HCT116 (cell line): ENCODE measurements at regions of chr11 and their contacts with region 1.

Region 1: GRCh38 chr11:46489661-46490560 is 98.3 kb upstream of the CHRM4 start:
- DNase-seq: peak; percentile 46
- ATAC-seq: peak; percentile 95
- H3K4me3 ChIP-seq: no peak overlapping the region
- H3K27ac ChIP-seq: no peak overlapping the region
- H3K4me1 ChIP-seq: no peaks in the 10 kb centered on the region
- H3K27me3 ChIP-seq: no peaks in the 10 kb centered on the region
- CTCF ChIP-seq: peak; percentile 39 to 75 (median 72); a peak in 5 of 6 replicates
- POLR2A ChIP-seq: no peak
- RAD21 ChIP-seq: no peak; the same call in 1 of the 2 replicates

Region 2: DNA sequence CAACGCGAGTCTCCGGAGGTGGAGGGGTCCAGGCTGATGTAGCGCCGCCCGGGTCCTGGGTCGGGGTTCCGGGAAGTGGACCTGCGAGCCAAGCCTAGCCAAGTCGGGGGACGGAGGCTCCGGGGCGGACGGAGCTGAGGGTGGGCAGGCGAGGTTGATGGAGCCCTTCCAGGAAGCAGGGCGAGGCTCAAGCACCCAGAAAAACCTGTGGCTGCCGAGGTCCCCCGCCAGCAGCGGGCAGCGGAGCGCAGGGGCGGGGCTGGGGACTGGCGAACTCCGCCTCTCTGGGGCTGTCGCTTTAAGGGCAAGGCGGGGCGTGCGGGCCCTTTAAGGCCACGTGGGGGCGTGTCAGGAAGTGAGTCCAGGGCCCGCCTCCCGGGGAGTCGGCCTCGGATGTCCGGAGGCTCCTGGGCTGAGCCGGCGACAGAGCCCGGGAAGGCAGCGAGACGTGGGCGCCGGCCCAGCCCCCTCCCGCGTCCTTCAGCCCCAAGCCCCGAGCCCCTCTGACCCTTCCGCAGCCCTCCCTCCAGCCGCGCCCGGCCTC is 685.1 kb before region 1 on chr11 and contains the start of gene SLC35C1:
- CTCF ChIA-PET with region 1: no interaction called
- POLR2A ChIA-PET with region 1: no interaction called
- RAD21 ChIA-PET with region 1: no interaction called
- intact Hi-C with region 1: no loop called
- DNase-seq: peak; percentile 86
- ATAC-seq: peak; percentile 89
- H3K4me3 ChIP-seq: peak within 1 kb of the TSS; percentile 85 to 86
- H3K27ac ChIP-seq: peak within 1 kb of the TSS; percentile 87
- H3K4me1 ChIP-seq: peaks cover 18 to 35% of the 10 kb centered on the region in 2 experiments
- H3K27me3 ChIP-seq: no peaks in the 10 kb centered on the region
- CTCF ChIP-seq: no peak
- POLR2A ChIP-seq: peak; percentile 60
- RAD21 ChIP-seq: no peak
- total RNA-seq, gene SLC35C1: 18.2 TPM

Region 3: DNA sequence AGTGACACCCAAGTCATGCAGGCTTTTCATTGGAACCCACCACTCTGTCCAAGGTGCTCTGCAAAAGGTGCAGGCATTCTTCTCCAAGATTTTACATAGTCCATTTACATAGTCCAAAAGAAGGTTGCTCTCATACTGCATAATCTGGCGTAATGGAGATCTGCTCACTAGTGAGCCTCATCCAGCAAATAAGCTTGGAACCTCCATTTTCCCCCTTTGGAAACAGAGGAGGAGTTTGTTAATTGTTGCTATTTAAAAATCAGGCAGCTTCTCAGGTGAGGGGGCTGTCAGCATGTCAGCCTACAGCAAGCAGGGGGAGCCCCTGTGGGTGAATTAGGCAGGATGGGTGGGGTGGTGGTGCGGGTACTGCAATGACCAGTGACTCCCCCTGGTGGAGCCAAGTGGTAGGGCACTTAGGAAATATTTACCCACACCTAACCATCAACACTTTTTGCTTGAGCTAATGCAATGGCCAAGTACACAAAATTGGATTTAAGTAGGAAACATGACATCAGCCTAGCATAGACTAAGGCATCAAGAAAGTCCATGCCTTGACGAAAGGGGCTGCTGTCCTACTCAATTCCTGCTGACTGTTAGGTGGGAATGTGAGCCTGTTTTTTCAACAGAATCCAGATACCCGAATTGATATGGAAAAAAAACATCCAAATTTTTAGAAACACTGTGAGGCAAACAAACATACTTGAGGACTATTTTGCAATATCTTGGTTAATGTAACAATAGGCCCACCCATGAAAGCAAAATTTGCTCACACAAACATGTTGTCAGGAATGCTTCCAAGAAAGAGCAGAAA is 39.4 kb after region 1 on chr11:
- CTCF ChIA-PET with region 1: interaction called, 16 read pairs
- POLR2A ChIA-PET with region 1: no interaction called
- RAD21 ChIA-PET with region 1: no interaction called
- intact Hi-C with region 1: loop called (anchors 5 kb)
- DNase-seq: peak; percentile 49
- ATAC-seq: peak; percentile 97
- H3K4me3 ChIP-seq: no peak overlapping the region
- H3K27ac ChIP-seq: no peak overlapping the region
- H3K4me1 ChIP-seq: peaks cover 0 to 4% of the 10 kb centered on the region in 2 experiments; a peak in 1 of 4 replicates
- H3K27me3 ChIP-seq: no peaks in the 10 kb centered on the region
- CTCF ChIP-seq: peak; percentile 90 to 96 (median 93)
- POLR2A ChIP-seq: no peak
- RAD21 ChIP-seq: peak; percentile 61

Region 4: DNA sequence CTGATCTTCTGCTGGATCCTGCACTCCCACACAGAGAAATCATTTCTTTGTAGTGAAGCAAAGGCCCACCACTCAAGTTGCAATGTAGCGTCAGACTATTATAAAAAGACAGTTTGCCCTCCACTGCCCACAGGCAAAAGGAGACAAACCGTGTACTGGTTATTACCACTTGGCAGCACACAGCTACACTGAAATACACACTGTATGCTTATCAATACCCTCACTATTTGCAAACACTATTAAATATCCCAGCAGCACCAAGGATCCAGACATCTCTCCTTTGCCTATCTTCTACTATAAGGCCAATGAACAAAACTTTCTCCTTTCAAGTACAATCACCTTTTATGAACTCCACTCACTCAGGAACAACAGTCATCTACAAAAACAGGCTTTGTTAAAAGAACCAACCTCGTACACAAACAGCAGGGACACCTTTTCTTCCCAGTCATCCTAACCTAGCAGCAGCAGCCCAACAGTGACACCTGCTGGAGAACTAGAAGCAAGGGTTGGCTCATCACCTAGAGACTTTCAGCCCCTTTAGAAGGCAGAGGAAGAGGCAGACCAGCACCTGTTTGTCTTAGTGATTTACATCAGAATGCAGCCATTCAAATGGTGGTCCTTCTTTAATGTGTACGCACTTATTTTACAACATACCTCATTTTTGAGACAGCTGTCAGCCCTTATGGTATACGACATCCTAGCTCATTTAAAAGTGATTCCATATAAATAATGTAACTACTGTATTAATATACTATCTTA is 47.8 kb after region 1 on chr11:
- CTCF ChIA-PET with region 1: interaction called, 5 read pairs
- POLR2A ChIA-PET with region 1: no interaction called
- RAD21 ChIA-PET with region 1: no interaction called
- intact Hi-C with region 1: loop called (anchors 1 kb)
- DNase-seq: peak; percentile 68
- ATAC-seq: peak; percentile 97
- H3K4me3 ChIP-seq: no peak overlapping the region
- H3K27ac ChIP-seq: no peak overlapping the region
- H3K4me1 ChIP-seq: peaks cover 0 to 7% of the 10 kb centered on the region in 2 experiments; a peak in 1 of 4 replicates
- H3K27me3 ChIP-seq: no peaks in the 10 kb centered on the region
- CTCF ChIP-seq: peak; percentile 80 to 97 (median 97)
- POLR2A ChIP-seq: no peak
- RAD21 ChIP-seq: peak; percentile 82

Region 5: GRCh38 chr11:46564459-46564858 is 74.5 kb after region 1 on chr11:
- CTCF ChIA-PET with region 1: no interaction called
- POLR2A ChIA-PET with region 1: no interaction called
- RAD21 ChIA-PET with region 1: no interaction called
- intact Hi-C with region 1: no loop called
- DNase-seq: no peak
- ATAC-seq: peak; percentile 58
- H3K4me3 ChIP-seq: no peak overlapping the region
- H3K27ac ChIP-seq: no peak overlapping the region; the same call in 1 of the 2 replicates
- H3K4me1 ChIP-seq: peaks cover 23 to 41% of the 10 kb centered on the region in 2 experiments
- H3K27me3 ChIP-seq: no peaks in the 10 kb centered on the region
- CTCF ChIP-seq: no peak
- POLR2A ChIP-seq: no peak
- RAD21 ChIP-seq: no peak